ENCODE measurements at regions of chr1 and their contacts with region 1.

Region 1: GRCh38 chr1:227999056-227999930 is 7.5 kb upstream of the WNT3A start:
- DNase-seq: peak; percentile 94
- H3K4me3 Mint-ChIP-seq: no peak overlapping the region
- H3K27ac Mint-ChIP-seq: no peak overlapping the region
- H3K4me1 Mint-ChIP-seq: peaks cover 17% of the 10 kb centered on the region
- H3K27me3 Mint-ChIP-seq: peaks cover 1% of the 10 kb centered on the region
- CTCF ChIP-seq: peak; percentile 100

Region 2: DNA sequence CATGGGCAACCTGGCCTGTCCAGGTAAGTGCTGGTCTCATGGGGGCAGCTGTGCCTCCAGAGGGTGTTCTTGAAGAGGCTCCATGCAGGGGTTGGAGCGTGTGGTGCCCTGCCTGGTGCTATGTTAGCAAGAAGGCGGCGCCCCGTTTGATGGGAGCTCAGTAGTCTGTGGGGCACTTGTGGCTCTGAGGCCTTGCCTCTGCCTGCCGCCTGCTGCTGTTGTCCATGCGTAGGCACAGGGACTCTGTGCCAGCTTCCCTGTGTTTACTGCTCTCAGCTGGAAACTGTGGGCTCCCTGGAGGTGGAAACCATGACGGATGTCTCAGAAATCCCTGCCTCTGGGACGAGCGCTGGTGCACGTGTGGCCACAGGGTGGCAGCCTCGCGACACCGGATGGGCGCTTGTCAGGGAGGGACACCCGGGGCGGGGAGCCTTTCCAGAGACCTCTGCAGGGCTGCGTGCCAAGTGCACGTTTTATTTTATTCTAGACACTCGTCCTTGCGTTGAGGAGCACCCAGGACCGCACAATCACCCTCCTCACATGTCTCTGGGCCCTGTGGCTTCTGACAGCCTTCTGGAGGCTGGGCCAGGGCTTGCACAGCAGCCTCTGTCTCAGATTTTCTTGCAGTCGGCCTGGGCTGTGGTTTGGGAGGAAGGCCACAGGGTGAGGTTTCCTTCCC is 236.9 kb before region 1 on chr1:
- CTCF ChIA-PET with region 1: interaction called, 37 read pairs
- POLR2A ChIA-PET with region 1: interaction called, 6 read pairs
- intact Hi-C with region 1: no loop called
- DNase-seq: peak; percentile 93
- H3K4me3 Mint-ChIP-seq: no peak overlapping the region
- H3K27ac Mint-ChIP-seq: no peak overlapping the region
- H3K4me1 Mint-ChIP-seq: peaks cover 74% of the 10 kb centered on the region
- H3K27me3 Mint-ChIP-seq: no peaks in the 10 kb centered on the region
- CTCF ChIP-seq: peak; percentile 99

Region 3: GRCh38 chr1:228013935-228014930 is 14.9 kb after region 1 on chr1:
- CTCF ChIA-PET with region 1: interaction called, 87 read pairs
- POLR2A ChIA-PET with region 1: interaction called, 20 read pairs
- intact Hi-C with region 1: no loop called
- DNase-seq: peak; percentile 99
- H3K4me3 Mint-ChIP-seq: no peak overlapping the region
- H3K27ac Mint-ChIP-seq: peak overlapping the region; percentile 69
- H3K4me1 Mint-ChIP-seq: peaks cover 14% of the 10 kb centered on the region
- H3K27me3 Mint-ChIP-seq: no peaks in the 10 kb centered on the region
- CTCF ChIP-seq: no peak

Region 4: DNA sequence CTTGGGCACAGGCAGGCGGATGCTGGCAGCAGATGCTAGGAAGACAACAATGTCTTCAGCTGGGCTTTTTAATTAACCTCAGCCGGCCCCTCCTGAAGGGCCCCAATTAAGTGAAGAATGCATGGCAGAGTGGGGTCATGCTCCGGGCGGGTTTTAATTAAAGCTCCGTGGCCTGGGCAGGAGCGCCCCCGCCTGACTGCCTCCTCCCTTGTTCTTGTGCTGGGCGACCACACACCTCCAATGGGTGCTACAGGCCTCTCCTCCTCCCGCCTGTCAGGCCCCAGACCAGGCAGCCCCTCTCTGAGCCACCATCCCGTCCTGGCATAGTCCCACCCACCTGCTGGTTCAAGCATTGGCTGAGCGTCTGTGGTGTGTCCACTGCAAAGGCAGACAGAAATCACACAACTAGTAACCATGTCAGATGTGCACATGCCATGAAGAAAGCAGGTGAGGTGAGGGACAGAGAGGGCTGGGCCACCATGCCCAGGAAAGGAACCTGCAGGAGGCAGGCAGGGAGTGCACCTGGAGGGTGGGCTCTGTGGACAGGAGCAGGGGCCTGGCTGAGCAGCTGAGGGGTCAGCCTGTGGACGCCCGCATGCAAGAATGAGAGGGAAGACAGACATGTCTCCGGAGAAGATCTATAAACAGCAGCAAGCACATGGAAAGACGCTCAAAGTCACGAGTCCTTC is 74.7 kb after region 1 on chr1:
- CTCF ChIA-PET with region 1: interaction called, 37 read pairs
- POLR2A ChIA-PET with region 1: interaction called, 19 read pairs
- intact Hi-C with region 1: loop called (anchors 1 kb)
- DNase-seq: peak; percentile 74
- H3K4me3 Mint-ChIP-seq: no peak overlapping the region
- H3K27ac Mint-ChIP-seq: no peak overlapping the region
- H3K4me1 Mint-ChIP-seq: peaks cover 11% of the 10 kb centered on the region
- H3K27me3 Mint-ChIP-seq: peaks cover 2% of the 10 kb centered on the region
- CTCF ChIP-seq: peak; percentile 77

Region 5: DNA sequence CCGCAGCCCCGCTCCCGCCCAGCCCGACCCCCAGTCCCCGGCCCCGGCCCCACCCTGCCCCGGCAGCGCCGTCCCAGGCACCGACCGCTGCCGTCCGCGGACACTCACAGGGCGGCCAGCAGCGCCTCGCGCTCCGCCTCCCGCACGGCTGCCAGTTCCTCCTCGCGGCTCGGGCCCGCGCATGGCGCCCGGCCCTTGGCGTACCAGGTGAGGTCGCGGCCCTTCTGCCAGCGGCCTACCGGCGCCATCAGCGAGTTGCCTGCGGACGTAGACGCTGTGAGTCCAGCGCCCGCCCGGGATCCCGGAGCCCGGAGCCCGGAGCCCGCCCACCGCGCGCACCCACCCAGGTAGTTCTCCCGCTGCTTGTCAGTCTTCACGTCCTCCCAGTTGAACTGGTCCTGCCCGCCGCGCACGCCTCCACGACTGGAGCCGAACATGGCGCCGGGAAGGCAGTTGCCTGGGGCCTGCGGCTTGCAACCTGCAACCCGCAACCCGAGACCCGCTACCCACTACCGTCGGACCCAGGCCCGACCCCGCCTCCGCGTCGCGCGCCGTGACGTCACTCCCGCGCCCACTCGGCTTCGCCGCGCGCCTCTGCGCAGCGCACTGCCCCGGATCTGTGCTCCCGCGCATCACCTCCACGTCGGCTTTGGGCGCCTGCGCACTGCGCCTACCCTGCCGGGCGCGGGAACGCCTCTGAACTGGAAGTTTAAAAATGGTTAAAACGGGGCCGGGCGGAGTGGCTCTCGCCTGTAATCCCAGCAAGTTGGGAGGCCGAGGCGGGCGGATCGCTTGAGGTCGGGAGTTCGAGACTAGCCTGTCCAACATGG is 103.7 kb after region 1 on chr1 and contains the start of gene C1orf35:
- CTCF ChIA-PET with region 1: interaction called, 26 read pairs
- POLR2A ChIA-PET with region 1: interaction called, 7 read pairs
- intact Hi-C with region 1: loop called (anchors 1 kb)
- DNase-seq: peak; percentile 98
- H3K4me3 Mint-ChIP-seq: peak within 1 kb of the TSS; percentile 87
- H3K27ac Mint-ChIP-seq: peak within 1 kb of the TSS; percentile 80
- H3K4me1 Mint-ChIP-seq: peaks cover 23% of the 10 kb centered on the region
- H3K27me3 Mint-ChIP-seq: no peaks in the 10 kb centered on the region
- CTCF ChIP-seq: no peak
- total RNA-seq, gene C1orf35: 48.9 and 49.2 TPM in 2 replicates

Region 6: GRCh38 chr1:228139944-228140656 is 140.8 kb after region 1 on chr1 and contains the start of gene GUK1:
- CTCF ChIA-PET with region 1: interaction called, 10 read pairs
- POLR2A ChIA-PET with region 1: interaction called, 3 read pairs
- intact Hi-C with region 1: no loop called
- DNase-seq: peak; percentile 100
- H3K4me3 Mint-ChIP-seq: peak within 1 kb of the TSS; percentile 99
- H3K27ac Mint-ChIP-seq: peak within 1 kb of the TSS; percentile 95
- H3K4me1 Mint-ChIP-seq: peaks cover 25% of the 10 kb centered on the region
- H3K27me3 Mint-ChIP-seq: peaks cover 29% of the 10 kb centered on the region
- CTCF ChIP-seq: peak; percentile 32
- total RNA-seq, gene GUK1: 495 and 510 TPM in 2 replicates

Region 7: DNA sequence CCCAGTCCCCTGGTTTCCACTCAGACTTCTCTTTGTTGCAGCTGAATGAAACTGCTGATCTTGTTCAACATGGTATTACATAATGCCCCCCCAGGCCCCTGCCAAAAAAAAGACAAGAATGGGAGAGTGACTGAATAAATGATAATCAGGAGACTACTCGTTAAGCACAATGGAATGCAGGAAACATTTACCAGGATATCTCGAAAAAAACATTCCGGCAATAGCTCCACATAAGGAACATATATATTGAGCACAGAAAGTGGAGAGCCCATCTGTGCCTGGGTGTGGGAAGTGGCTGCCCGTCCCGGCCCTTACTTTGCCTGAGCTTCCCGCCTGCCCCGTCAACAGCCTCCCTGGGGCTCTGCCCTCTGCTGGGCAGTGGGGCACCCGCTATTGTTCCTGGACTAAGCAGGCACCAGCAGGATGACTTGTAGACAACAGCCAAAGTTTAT is 394.0 kb after region 1 on chr1:
- CTCF ChIA-PET with region 1: interaction called, 3 read pairs
- POLR2A ChIA-PET with region 1: no interaction called
- intact Hi-C with region 1: loop called (anchors 10 kb)
- DNase-seq: peak; percentile 82
- H3K4me3 Mint-ChIP-seq: no peak overlapping the region
- H3K27ac Mint-ChIP-seq: peak overlapping the region; percentile 75
- H3K4me1 Mint-ChIP-seq: peaks cover 17% of the 10 kb centered on the region
- H3K27me3 Mint-ChIP-seq: no peaks in the 10 kb centered on the region
- CTCF ChIP-seq: peak; percentile 64